T-cell (primary cell): ENCODE measurements at regions of chr11 and their contacts with region 1.

Region 1: DNA sequence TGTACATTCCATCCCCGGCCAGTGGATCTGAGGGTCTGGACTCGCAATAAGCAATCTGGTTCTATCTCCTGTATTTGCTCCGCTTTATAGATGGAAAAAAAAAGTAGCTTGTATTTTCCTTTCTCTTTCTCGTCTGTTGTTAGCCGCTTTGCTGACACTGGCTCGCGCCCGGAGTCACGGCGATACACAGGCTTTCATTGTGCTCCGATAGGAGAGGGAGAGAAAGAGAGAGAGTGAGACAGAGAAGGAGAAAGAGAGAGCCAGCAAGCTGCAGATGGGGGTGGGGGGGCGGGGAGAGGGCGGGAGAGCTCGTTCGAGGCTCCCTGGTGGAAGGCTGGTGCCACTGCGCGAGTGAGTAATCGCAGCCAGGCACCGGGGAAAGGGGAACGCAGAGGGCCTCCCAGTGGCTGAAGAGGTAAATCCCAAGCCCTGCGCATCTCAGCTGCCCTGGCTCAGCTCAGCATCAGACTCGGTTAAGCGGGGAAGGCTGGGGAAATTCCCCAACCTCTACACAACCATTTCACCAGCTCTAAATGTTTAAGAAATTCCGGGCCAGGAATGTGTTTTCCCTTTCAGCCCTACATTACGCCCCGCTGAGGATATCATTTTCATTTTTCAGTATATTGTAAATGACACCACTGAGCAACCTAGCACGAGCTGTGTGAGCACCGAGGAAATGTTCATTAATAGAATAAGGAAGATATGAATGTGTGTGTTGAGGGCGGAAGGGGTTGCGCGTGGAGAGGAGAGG is at the start of gene MAML2:
- DNase-seq: peak; percentile 67 to 95 (median 89)
- ATAC-seq: peak; percentile 82 to 90 (median 85)
- H3K4me3 ChIP-seq: peak within 1 kb of the TSS; percentile 69 to 97
- H3K4me3 Mint-ChIP-seq: peak within 1 kb of the TSS; percentile 87 to 98 (median 98)
- H3K27ac ChIP-seq: peak within 1 kb of the TSS; percentile 61
- H3K27ac Mint-ChIP-seq: peak within 1 kb of the TSS; percentile 93 to 98
- H3K4me1 ChIP-seq: peaks cover 11 to 36% of the 10 kb centered on the region in 2 experiments
- H3K4me1 Mint-ChIP-seq: peaks cover 23 to 46% (median 36%) of the 10 kb centered on the region in 3 donors
- H3K27me3 ChIP-seq: no peaks in the 10 kb centered on the region
- H3K27me3 Mint-ChIP-seq: no peaks in the 10 kb centered on the region
- total RNA-seq, gene MAML2: 30.4 to 66.7 (median 35.1) TPM

Region 2: DNA sequence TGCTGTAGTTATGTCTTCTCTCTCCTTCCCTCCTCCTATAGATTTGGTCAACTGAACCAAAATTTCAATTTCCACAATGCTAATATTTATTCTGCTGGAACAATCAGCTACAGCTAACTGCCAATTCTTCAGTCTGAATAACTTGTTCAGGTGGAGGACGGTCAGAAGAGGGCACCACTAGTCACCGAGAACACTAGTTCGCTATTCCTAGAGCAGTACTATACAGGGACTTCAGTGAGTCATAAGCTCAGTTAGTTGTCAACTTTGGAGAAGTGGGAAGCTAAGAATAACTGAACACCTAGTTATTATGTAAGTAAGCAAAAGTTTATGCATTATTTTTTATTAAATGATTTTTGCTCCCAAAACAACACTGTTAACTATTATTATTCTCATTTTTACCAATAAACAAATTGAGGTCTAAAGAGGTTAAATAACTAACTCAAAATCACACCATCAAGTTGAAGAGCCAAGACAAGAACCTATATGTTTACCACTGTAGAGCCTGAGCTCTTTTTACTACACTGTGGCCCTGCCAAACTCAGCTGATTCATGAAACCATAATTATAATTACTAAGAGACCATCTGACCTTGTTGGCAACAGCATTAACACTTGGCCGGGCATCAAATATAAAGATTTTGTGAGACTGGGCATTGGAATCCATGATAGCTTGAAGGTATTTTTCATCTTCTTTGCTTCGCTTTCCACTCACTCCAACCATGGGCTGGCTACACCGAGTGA is 493.9 kb before region 1 on chr11:
- CTCF ChIA-PET with region 1: interaction called in 1 of 2 experiments, 16 read pairs
- POLR2A ChIA-PET with region 1: interaction called in 1 of 2 experiments, 6 read pairs
- DNase-seq: peak in 12 of 35 experiments; percentile 0 to 41 (median 4)
- ATAC-seq: peak; percentile 35 to 58 (median 51)
- H3K4me3 ChIP-seq: no peak overlapping the region
- H3K4me3 Mint-ChIP-seq: no peak overlapping the region
- H3K27ac ChIP-seq: no peak overlapping the region
- H3K27ac Mint-ChIP-seq: no peak overlapping the region
- H3K4me1 ChIP-seq: no peaks in the 10 kb centered on the region
- H3K4me1 Mint-ChIP-seq: no peaks in the 10 kb centered on the region
- H3K27me3 ChIP-seq: no peaks in the 10 kb centered on the region
- H3K27me3 Mint-ChIP-seq: no peaks in the 10 kb centered on the region

Region 3: GRCh38 chr11:96091476-96091875 is 251.7 kb before region 1 on chr11:
- CTCF ChIA-PET with region 1: interaction called, 8 to 48 read pairs
- POLR2A ChIA-PET with region 1: no interaction called
- DNase-seq: peak in 15 of 35 experiments; percentile 4 to 58 (median 20)
- ATAC-seq: peak; percentile 73 to 95 (median 91)
- H3K4me3 ChIP-seq: no peak overlapping the region
- H3K4me3 Mint-ChIP-seq: no peak overlapping the region
- H3K27ac ChIP-seq: no peak overlapping the region
- H3K27ac Mint-ChIP-seq: no peak overlapping the region
- H3K4me1 ChIP-seq: peaks cover 0 to 14% of the 10 kb centered on the region in 2 experiments
- H3K4me1 Mint-ChIP-seq: peaks cover 82 to 90% (median 86%) of the 10 kb centered on the region in 3 donors
- H3K27me3 ChIP-seq: no peaks in the 10 kb centered on the region
- H3K27me3 Mint-ChIP-seq: no peaks in the 10 kb centered on the region

Region 4: GRCh38 chr11:96237766-96238266 is 105.3 kb before region 1 on chr11:
- CTCF ChIA-PET with region 1: interaction called, 13 to 36 read pairs
- POLR2A ChIA-PET with region 1: interaction called, 3 to 4 read pairs
- DNase-seq: no peak
- ATAC-seq: no peak
- H3K4me3 ChIP-seq: no peak overlapping the region
- H3K4me3 Mint-ChIP-seq: no peak overlapping the region
- H3K27ac ChIP-seq: no peak overlapping the region
- H3K27ac Mint-ChIP-seq: no peak overlapping the region
- H3K4me1 ChIP-seq: peaks cover 12 to 22% of the 10 kb centered on the region in 2 experiments
- H3K4me1 Mint-ChIP-seq: peaks cover 31 to 47% (median 31%) of the 10 kb centered on the region in 3 donors
- H3K27me3 ChIP-seq: no peaks in the 10 kb centered on the region
- H3K27me3 Mint-ChIP-seq: no peaks in the 10 kb centered on the region

Region 5: GRCh38 chr11:96279018-96279895 is 63.9 kb before region 1 on chr11:
- CTCF ChIA-PET with region 1: interaction called, 9 to 12 read pairs
- POLR2A ChIA-PET with region 1: interaction called in 1 of 2 experiments, 3 read pairs
- DNase-seq: no peak
- ATAC-seq: peak; percentile 38 to 82 (median 73)
- H3K4me3 ChIP-seq: no peak overlapping the region
- H3K4me3 Mint-ChIP-seq: peak overlapping the region in 1 of 3 donors; percentile 40
- H3K27ac ChIP-seq: no peak overlapping the region
- H3K27ac Mint-ChIP-seq: peak overlapping the region; percentile 62 to 66
- H3K4me1 ChIP-seq: peaks cover 6 to 31% of the 10 kb centered on the region in 2 experiments
- H3K4me1 Mint-ChIP-seq: peaks cover 70 to 76% (median 71%) of the 10 kb centered on the region in 3 donors
- H3K27me3 ChIP-seq: no peaks in the 10 kb centered on the region
- H3K27me3 Mint-ChIP-seq: no peaks in the 10 kb centered on the region

Region 6: GRCh38 chr11:96357794-96358193 is 14.7 kb after region 1 on chr11:
- CTCF ChIA-PET with region 1: interaction called, 4 to 12 read pairs
- POLR2A ChIA-PET with region 1: no interaction called
- DNase-seq: peak in 1 of 35 experiments; percentile 20
- ATAC-seq: peak in 1 of 4 experiments; percentile 49
- H3K4me3 ChIP-seq: no peak overlapping the region
- H3K4me3 Mint-ChIP-seq: no peak overlapping the region
- H3K27ac ChIP-seq: no peak overlapping the region
- H3K27ac Mint-ChIP-seq: peak overlapping the region in 1 of 2 donors; percentile 23
- H3K4me1 ChIP-seq: no peaks in the 10 kb centered on the region
- H3K4me1 Mint-ChIP-seq: peaks cover 4 to 15% (median 9%) of the 10 kb centered on the region in 3 donors
- H3K27me3 ChIP-seq: no peaks in the 10 kb centered on the region
- H3K27me3 Mint-ChIP-seq: no peaks in the 10 kb centered on the region

Region 7: DNA sequence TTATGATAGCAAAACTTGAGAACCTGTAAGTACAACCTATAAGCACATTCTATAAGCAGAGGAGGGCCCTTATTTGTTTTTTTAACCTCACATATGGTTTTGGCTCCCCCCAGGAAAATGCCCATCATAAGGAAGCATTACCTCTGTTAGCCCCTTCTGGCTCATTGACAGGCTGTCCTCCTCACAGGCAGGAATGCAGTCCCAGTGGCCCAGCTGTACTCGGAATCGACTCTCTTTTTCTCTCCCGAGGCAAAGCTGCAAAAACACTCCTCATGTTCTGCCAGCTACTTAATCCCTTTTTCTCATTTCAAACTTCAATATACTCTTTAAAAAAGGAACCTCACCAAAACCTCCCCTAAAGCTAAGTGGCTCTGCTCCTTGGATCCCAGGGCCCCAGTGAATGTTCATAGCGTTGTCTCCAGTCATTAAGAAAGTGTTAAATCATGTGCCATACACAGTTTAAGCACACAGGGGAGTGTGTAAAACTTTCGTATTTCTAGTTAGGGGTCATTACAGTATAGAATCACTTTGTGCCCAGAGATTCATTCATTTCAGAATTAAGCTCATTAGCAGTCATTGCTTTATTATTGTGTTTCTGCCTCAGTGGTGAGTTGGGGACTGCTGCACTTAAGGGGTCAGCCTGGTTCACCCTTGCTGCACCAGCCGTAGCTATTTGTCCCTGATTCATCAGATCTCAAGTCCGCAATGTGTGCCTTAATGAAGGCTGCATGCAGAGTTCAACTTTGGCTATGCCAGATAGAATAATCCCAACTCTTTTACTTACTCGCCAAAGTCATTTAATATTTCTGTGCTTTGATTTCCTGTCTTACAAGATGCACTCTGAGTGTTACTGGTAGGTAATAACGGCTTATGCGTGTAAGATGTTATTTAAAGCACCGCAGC is 104.3 kb after region 1 on chr11:
- CTCF ChIA-PET with region 1: no interaction called
- POLR2A ChIA-PET with region 1: no interaction called
- DNase-seq: no peak
- ATAC-seq: no peak
- H3K4me3 ChIP-seq: no peak overlapping the region
- H3K4me3 Mint-ChIP-seq: no peak overlapping the region
- H3K27ac ChIP-seq: no peak overlapping the region
- H3K27ac Mint-ChIP-seq: no peak overlapping the region
- H3K4me1 ChIP-seq: no peaks in the 10 kb centered on the region
- H3K4me1 Mint-ChIP-seq: no peaks in the 10 kb centered on the region
- H3K27me3 ChIP-seq: peaks cover 2% of the 10 kb centered on the region in 2 experiments
- H3K27me3 Mint-ChIP-seq: peaks cover 16 to 20% of the 10 kb centered on the region in 2 donors